ENCODE measurements at regions of chr1 and their contacts with region 1.

Region 1: DNA sequence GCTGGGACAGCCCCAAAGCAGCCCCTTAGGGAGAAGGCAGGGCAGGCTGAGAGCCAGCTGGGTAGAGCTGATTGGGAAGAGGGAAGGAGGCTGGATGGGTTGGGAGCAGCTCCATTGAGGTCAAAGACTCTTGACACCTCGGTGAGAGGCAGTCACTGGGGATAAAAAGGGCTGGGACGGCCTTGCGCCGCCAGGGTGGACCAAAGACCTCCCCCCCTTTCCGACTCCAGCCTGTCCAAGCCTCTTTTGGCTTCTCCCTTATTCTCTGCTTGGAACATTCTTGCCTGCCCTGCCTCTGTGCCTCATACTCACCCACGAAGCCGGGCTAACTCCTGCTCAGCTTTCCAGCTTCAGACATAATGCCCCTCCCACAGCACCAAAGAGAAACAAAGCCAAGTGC is 51.1 kb downstream of the LRRC38 start:
- DNase-seq: peak; percentile 69 to 74 (median 71)
- ATAC-seq: peak; percentile 68 to 77
- H3K4me3 ChIP-seq: no peak overlapping the region
- H3K27ac ChIP-seq: no peak overlapping the region
- H3K4me1 ChIP-seq: no peaks in the 10 kb centered on the region
- H3K27me3 ChIP-seq: no peaks in the 10 kb centered on the region

Region 2: DNA sequence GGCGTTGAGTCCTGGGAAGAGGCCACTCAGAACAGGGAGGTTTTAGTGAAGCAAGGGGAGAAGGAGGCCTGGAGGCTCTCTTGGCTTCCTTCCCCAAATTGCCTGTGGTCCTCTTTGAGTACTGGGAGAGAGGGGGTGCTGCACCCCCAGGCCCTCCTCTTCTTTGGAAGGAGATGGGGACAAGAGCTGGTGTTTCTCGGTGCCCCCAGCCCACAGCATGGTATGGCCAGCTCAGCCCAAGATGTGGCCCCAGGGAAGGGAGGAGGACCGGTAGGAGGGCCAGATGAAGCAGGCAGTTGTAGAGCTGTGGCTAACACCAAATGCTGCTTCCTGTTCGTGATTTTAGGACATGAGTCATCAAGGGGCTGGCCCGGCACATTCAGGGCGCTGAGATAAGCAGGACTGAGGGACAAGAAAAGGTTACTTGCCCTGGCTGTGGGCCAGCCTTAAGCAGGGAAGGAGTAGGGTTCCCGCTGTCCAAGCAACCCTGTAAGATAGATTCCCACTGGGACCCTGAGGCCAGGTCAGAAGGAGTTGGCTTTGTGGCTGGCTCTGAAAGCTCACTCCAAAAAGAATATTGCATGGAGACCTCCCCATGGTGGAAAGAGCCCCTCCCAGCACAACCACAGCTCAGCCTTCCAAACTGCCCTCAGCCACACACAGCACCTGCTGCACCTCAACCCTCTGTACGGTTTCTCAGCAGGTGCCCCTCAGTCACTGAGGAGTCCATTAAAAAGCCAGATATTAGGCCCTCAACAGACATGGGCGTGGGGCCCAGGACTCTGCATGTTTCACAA is 1300.8 kb before region 1 on chr1:
- intact Hi-C with region 1: no loop called
- DNase-seq: peak; percentile 96 to 98 (median 96)
- ATAC-seq: peak; percentile 93 to 96
- H3K4me3 ChIP-seq: no peak overlapping the region
- H3K27ac ChIP-seq: peak overlapping the region; percentile 63
- H3K4me1 ChIP-seq: peaks cover 15% of the 10 kb centered on the region
- H3K27me3 ChIP-seq: no peaks in the 10 kb centered on the region

Region 3: GRCh38 chr1:13539683-13540082 is 77.0 kb after region 1 on chr1:
- intact Hi-C with region 1: loop called in 1 of 4 experiments (anchors 5 kb)
- DNase-seq: no peak
- ATAC-seq: no peak
- H3K4me3 ChIP-seq: no peak overlapping the region
- H3K27ac ChIP-seq: no peak overlapping the region
- H3K4me1 ChIP-seq: peaks cover 8% of the 10 kb centered on the region
- H3K27me3 ChIP-seq: no peaks in the 10 kb centered on the region

Measured in right cardiac atrium (tissue), 5 donors.